Naive thymus-derived CD4-positive, alpha-beta T cell (primary cell): ENCODE measurements at regions of chr3 and their contacts with region 1.

Region 1: GRCh38 chr3:69496856-69497255 is 111.0 kb upstream of the FRMD4B start:
- DNase-seq: no peak
- ATAC-seq: no peak
- H3K4me3 ChIP-seq: no peak overlapping the region
- H3K4me3 Mint-ChIP-seq: no peak overlapping the region
- H3K27ac ChIP-seq: no peak overlapping the region
- H3K27ac Mint-ChIP-seq: no peak overlapping the region
- H3K4me1 ChIP-seq: no peaks in the 10 kb centered on the region
- H3K4me1 Mint-ChIP-seq: peaks cover 0 to 1% (median 0%) of the 10 kb centered on the region in 7 donors
- H3K27me3 ChIP-seq: no peaks in the 10 kb centered on the region
- H3K27me3 Mint-ChIP-seq: peaks cover 3 to 25% (median 22%) of the 10 kb centered on the region in 5 donors

Region 2: GRCh38 chr3:69521286-69521685 is 24.4 kb after region 1 on chr3:
- CTCF ChIA-PET with region 1: interaction called, 10 read pairs
- POLR2A ChIA-PET with region 1: no interaction called
- intact Hi-C with region 1: no loop called
- DNase-seq: no peak
- ATAC-seq: no peak
- H3K4me3 ChIP-seq: no peak overlapping the region
- H3K4me3 Mint-ChIP-seq: no peak overlapping the region
- H3K27ac ChIP-seq: no peak overlapping the region
- H3K27ac Mint-ChIP-seq: no peak overlapping the region
- H3K4me1 ChIP-seq: no peaks in the 10 kb centered on the region
- H3K4me1 Mint-ChIP-seq: peaks cover 0 to 2% (median 0%) of the 10 kb centered on the region in 7 donors
- H3K27me3 ChIP-seq: no peaks in the 10 kb centered on the region
- H3K27me3 Mint-ChIP-seq: peaks cover 0 to 5% (median 4%) of the 10 kb centered on the region in 5 donors